ENCODE measurements at regions of chr16 and their contacts with region 1.

Region 1: DNA sequence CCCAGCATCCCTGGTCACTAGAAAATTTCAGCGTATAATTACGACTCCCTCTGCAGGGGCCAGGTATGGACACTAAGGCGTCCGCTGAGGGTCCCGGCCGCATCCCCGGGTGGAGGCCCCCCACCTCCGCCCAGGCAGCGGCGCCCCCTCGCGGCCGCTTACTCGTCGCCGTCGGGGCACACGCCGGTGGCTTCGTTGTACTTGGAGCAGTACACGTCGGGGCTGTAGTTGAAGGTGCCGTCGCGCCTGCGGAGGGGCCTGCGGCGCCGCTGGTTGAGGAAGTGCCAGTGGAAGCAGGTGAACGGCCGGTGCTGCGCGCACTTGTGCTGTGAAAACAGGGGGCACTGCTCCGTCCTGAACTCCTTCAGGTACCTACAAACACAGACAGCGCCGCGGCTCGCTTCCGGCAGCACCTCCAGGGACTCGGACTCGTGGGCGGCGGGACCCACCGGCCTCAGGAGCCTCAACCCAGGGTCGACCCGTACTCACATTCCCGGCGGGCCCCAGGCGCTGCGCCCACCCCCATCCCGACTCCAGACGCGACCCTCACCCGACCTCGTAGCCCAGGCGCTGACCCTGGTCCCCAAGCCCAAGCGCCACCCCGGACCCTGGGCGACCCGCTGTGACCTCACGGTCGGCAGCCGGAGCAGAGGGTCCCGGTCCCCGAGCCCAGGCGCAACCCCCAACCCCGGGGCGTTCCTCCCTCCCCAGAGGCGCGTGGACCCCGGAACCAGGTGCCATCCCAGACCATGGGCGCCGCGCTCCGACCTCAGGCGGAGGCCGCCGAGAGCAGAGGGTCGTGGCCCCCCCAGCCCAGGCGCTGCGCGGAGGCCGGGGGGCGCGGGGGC is 596 bp downstream of the UNKL start:
- DNase-seq: peak; percentile 65 to 79
- ATAC-seq: peak; percentile 53 to 74 (median 61)
- H3K4me3 ChIP-seq: peak overlapping the region; percentile 58
- H3K4me3 Mint-ChIP-seq: peak overlapping the region; percentile 83
- H3K27ac ChIP-seq: peak overlapping the region; percentile 81
- H3K27ac Mint-ChIP-seq: peak overlapping the region; percentile 70 to 84
- H3K4me1 ChIP-seq: peaks cover 28% of the 10 kb centered on the region
- H3K4me1 Mint-ChIP-seq: peaks cover 0 to 9% of the 10 kb centered on the region in 2 donors
- H3K27me3 ChIP-seq: no peaks in the 10 kb centered on the region
- H3K27me3 Mint-ChIP-seq: no peaks in the 10 kb centered on the region
- CTCF ChIP-seq: peak; percentile 73

Region 2: GRCh38 chr16:1300664-1301476 is 113.0 kb before region 1 on chr16:
- intact Hi-C with region 1: loop called (anchors 2 kb)
- DNase-seq: peak; percentile 78 to 82
- ATAC-seq: peak; percentile 77 to 84 (median 81)
- H3K4me3 ChIP-seq: no peak overlapping the region
- H3K4me3 Mint-ChIP-seq: no peak overlapping the region
- H3K27ac ChIP-seq: no peak overlapping the region
- H3K27ac Mint-ChIP-seq: no peak overlapping the region
- H3K4me1 ChIP-seq: peaks cover 27% of the 10 kb centered on the region
- H3K4me1 Mint-ChIP-seq: peaks cover 4 to 20% of the 10 kb centered on the region in 2 donors
- H3K27me3 ChIP-seq: peaks cover 3% of the 10 kb centered on the region
- H3K27me3 Mint-ChIP-seq: peaks cover 4 to 6% of the 10 kb centered on the region in 2 donors
- CTCF ChIP-seq: peak; percentile 85

Region 3: GRCh38 chr16:1378804-1379303 is 35.1 kb before region 1 on chr16:
- intact Hi-C with region 1: loop called (anchors 5 kb)
- DNase-seq: peak; percentile 74 to 82
- ATAC-seq: peak; percentile 83 to 88 (median 85)
- H3K4me3 ChIP-seq: no peak overlapping the region
- H3K4me3 Mint-ChIP-seq: peak overlapping the region; percentile 79
- H3K27ac ChIP-seq: no peak overlapping the region
- H3K27ac Mint-ChIP-seq: peak overlapping the region; percentile 79 to 90
- H3K4me1 ChIP-seq: peaks cover 19% of the 10 kb centered on the region
- H3K4me1 Mint-ChIP-seq: peaks cover 6 to 28% of the 10 kb centered on the region in 2 donors
- H3K27me3 ChIP-seq: no peaks in the 10 kb centered on the region
- H3K27me3 Mint-ChIP-seq: no peaks in the 10 kb centered on the region
- CTCF ChIP-seq: no peak